ENCODE measurements at regions of chr1 and their contacts with region 1.

Region 1: GRCh38 chr1:24201941-24202440 is 14.9 kb upstream of the IFNLR1 start:
- H3K4me3 ChIP-seq: no peak overlapping the region
- H3K27ac ChIP-seq: no peak overlapping the region
- H3K4me1 ChIP-seq: no peaks in the 10 kb centered on the region
- CTCF ChIP-seq: peak; percentile 62; the same call in 1 of the 2 replicates

Region 2: DNA sequence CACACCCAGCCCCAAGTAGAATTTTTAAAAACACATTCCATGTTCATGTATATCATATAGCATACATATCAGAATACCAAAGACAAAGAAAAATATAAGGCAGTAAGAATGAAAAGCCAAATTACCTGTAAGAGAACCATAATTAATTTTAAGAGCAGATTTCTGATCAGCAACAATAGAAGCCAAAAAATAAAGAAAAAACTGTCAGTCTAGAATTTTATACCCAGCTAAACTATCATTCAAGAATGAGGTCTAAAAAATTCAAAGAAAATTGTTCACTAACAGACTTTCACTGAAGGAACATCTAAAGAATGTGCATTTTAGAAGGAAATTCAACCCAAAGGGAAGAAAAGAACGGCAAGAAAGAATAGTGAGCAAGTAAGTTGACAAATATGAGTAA is 323.3 kb before region 1 on chr1:
- CTCF ChIA-PET with region 1: no interaction called
- POLR2A ChIA-PET with region 1: no interaction called
- H3K4me3 ChIP-seq: no peak overlapping the region
- H3K27ac ChIP-seq: no peak overlapping the region
- H3K4me1 ChIP-seq: no peaks in the 10 kb centered on the region
- CTCF ChIP-seq: no peak

Region 3: GRCh38 chr1:24070821-24071393 is 131.1 kb before region 1 on chr1:
- CTCF ChIA-PET with region 1: interaction called, 26 read pairs
- POLR2A ChIA-PET with region 1: no interaction called
- H3K4me3 ChIP-seq: no peak overlapping the region
- H3K27ac ChIP-seq: no peak overlapping the region
- H3K4me1 ChIP-seq: no peaks in the 10 kb centered on the region
- CTCF ChIP-seq: peak; percentile 88

Region 4: DNA sequence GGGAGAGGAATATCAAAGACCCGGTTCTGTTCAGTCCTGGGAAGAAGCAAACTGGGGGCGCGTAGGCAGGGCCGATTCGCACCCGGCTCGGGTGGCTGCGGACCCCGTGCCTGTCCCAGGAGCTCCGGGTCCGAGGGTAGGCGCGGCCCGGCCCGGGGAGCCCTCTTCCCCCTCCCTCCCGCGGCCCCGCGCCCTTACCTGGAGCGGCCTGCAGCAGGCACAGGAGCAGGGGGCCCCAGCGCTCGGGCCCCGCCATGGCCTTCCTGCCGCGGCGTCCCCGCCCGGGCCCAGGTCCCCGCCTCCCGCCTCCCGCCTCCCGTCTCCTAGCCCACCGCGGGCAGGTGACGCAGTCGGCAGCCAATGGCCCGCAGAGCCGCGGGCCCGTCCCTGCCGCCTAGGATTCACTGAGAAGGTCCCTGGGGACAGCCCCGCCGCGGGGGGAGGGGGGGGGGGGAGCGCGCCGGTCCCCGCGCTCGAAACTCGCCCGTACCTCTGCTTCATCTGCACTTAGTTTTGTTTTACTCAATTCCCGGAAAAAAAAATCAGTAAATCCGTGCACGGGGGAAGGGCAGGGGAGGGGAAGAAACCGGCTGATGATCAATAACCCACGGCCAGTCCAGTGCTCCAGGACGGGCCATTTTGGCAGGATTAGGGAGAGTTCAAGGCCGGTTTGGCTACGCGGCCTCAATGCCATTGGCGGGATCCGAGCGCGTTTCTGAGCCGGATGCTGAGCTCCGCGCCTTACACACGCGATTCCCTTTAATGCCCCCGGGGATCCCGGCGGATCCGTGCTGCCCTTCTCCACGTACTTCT is 14.8 kb before region 1 on chr1 and contains the start of gene IFNLR1:
- CTCF ChIA-PET with region 1: interaction called, 43 read pairs
- POLR2A ChIA-PET with region 1: interaction called, 4 read pairs
- H3K4me3 ChIP-seq: peak within 1 kb of the TSS; percentile 69
- H3K27ac ChIP-seq: peak within 1 kb of the TSS; percentile 82
- H3K4me1 ChIP-seq: peaks cover 3% of the 10 kb centered on the region
- CTCF ChIP-seq: no peak

Region 5: DNA sequence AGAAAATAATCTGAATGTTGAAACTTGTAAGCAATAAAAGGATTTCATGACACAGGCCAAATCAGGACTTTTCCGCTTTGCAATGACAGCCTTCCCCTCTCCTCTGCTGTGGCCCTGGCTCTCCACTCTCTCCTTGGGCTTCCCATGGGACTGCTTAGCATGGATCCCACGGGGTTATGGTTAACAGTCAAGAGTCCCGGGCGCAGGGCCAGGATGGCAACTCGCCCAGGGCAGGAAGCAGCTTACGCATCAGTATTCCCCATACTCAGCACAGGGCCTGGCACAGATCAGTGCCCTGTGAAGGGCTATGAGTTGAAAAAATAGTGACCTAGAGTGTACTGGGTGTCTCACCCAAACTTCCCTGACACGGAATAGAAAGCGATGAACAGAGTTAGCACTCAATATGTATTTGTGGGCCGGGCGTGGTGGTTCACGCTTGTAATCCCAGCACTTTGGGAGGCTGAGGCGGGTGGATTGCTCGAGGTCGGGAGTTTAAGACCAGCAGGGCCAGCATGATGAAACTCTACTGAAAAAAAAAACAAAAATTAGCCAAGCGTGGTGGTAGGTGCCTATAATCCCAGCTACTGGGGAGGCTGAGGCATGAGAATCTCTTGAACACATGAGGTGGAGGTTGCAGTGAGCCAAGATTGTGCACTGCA is 88.1 kb after region 1 on chr1:
- CTCF ChIA-PET with region 1: interaction called, 12 read pairs
- POLR2A ChIA-PET with region 1: no interaction called
- H3K4me3 ChIP-seq: no peak overlapping the region
- H3K27ac ChIP-seq: peak overlapping the region; percentile 29; the same call in 1 of the 2 replicates
- H3K4me1 ChIP-seq: peaks cover 8% of the 10 kb centered on the region
- CTCF ChIP-seq: no peak

Region 6: GRCh38 chr1:24321697-24322469 is 119.9 kb after region 1 on chr1:
- CTCF ChIA-PET with region 1: interaction called, 27 read pairs
- POLR2A ChIA-PET with region 1: interaction called, 8 read pairs
- H3K4me3 ChIP-seq: peak overlapping the region; percentile 40
- H3K27ac ChIP-seq: peak overlapping the region; percentile 93
- H3K4me1 ChIP-seq: peaks cover 21% of the 10 kb centered on the region
- CTCF ChIP-seq: peak; percentile 66

Region 7: GRCh38 chr1:24385160-24385940 is 183.4 kb after region 1 on chr1:
- CTCF ChIA-PET with region 1: interaction called, 611 read pairs
- POLR2A ChIA-PET with region 1: interaction called, 7 read pairs
- H3K4me3 ChIP-seq: no peak overlapping the region
- H3K27ac ChIP-seq: no peak overlapping the region
- H3K4me1 ChIP-seq: no peaks in the 10 kb centered on the region
- CTCF ChIP-seq: peak; percentile 50

Region 8: GRCh38 chr1:24415334-24415909 is 213.4 kb after region 1 on chr1 and contains the start of gene NIPAL3:
- CTCF ChIA-PET with region 1: interaction called, 27 read pairs
- POLR2A ChIA-PET with region 1: interaction called, 3 read pairs
- H3K4me3 ChIP-seq: peak within 1 kb of the TSS; percentile 49
- H3K27ac ChIP-seq: no peak within 1 kb of the TSS; the same call in 1 of the 2 replicates
- H3K4me1 ChIP-seq: peaks cover 6% of the 10 kb centered on the region
- CTCF ChIP-seq: peak; percentile 96